IMR-90 (cell line): ENCODE measurements at regions of chr9 and their contacts with region 1.

Region 1: DNA sequence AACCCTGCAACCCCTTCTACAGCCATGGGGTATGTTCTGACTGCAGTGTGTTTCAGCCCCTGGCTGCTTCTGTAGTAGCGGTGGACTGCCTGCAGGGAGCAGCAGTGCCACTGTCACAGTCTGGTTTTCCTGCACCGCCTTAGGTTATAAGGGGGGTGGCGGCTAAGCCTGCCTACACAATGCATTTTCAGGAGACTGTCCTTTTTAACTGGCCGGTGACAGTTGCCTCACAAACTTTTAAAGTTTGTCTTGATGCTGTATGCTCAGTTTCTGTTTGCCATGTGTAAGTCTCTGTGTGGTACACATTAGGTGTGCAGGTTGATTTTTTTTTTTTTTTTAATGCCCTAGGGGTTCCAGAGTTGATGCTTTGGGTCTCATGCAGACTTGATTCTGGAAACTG is 53.0 kb downstream of the NUP214 start:
- DNase-seq: peak; percentile 86
- ATAC-seq: peak; percentile 91
- H3K4me3 ChIP-seq: no peak overlapping the region
- H3K27ac ChIP-seq: no peak overlapping the region; the same call in 1 of the 2 replicates
- H3K4me1 ChIP-seq: peaks cover 18% of the 10 kb centered on the region
- H3K27me3 ChIP-seq: no peaks in the 10 kb centered on the region
- CTCF ChIP-seq: peak; percentile 94
- POLR2A ChIP-seq: no peak
- RAD21 ChIP-seq: peak; percentile 95

Region 2: DNA sequence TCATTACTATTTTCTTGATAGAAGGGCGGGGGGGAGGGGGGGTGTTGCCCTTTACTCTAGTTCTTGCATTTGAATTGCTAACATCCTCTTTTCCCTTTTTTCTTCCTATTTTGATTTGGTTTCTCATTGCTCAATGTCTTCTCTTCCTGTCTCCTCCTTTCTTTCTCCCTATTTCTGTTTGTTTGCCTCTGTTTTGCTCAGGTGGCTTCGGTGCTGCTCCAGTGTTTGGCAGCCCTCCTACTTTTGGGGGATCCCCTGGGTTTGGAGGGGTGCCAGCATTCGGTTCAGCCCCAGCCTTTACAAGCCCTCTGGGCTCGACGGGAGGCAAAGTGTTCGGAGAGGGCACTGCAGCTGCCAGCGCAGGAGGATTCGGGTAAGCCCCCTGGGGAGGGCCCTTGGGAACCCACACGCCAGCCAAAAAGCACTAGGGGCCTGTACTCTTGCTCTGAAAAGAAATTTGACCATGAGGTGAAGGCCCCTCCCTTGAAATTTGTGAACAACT is 49.6 kb after region 1 on chr9:
- CTCF ChIA-PET with region 1: no interaction called
- POLR2A ChIA-PET with region 1: no interaction called
- dilution Hi-C with region 1: no loop called
- in situ Hi-C with region 1: no loop called
- intact Hi-C with region 1: loop called (anchors 2 kb)
- DNase-seq: no peak
- ATAC-seq: no peak
- H3K4me3 ChIP-seq: no peak overlapping the region
- H3K27ac ChIP-seq: no peak overlapping the region
- H3K4me1 ChIP-seq: peaks cover 19% of the 10 kb centered on the region
- H3K27me3 ChIP-seq: no peaks in the 10 kb centered on the region
- CTCF ChIP-seq: no peak
- POLR2A ChIP-seq: no peak
- RAD21 ChIP-seq: no peak

Region 3: DNA sequence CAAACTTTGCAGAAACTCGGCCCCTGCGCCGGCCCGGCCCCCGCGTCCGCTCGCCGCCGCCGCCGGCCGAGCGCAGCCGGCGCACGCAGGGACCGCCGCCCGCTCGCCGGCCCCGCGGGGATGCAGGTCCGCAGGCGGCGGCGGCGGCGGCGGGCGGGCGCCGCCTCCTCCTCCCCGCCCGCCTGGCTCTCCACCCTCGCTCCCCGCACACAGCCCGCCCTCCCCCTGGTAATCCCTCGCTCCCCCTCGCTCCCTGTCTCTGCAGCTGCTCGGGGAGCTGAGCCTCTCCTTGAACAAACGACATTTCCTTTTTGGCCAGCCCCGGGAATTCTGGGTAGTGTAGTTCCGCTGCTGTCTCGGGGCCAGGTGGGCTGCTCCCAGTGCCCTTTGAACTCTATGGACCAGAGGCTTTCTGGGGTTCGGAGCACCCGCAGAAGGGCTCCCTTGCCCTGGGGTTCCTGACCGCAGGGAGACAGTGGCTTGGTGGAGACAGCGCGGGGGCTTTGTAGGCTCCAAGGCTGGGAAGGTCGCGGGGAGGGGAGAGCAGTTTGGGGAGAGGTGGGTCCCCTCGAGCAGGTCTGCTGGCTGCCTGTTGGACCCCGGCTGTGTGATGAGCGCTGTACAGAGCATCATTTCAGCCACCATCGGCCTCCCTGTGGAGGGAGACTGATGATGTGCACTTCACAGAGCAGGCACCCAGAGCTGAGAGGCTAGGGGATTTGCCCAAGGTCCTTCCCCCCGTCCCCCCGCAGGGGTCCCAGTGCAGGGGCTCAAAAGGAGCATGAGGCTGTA is 99.7 kb after region 1 on chr9:
- CTCF ChIA-PET with region 1: no interaction called
- POLR2A ChIA-PET with region 1: no interaction called
- dilution Hi-C with region 1: no loop called
- in situ Hi-C with region 1: no loop called
- intact Hi-C with region 1: loop called (anchors 2 kb)
- DNase-seq: peak; percentile 78
- ATAC-seq: peak; percentile 93
- H3K4me3 ChIP-seq: peak overlapping the region; percentile 66
- H3K27ac ChIP-seq: no peak overlapping the region
- H3K4me1 ChIP-seq: no peaks in the 10 kb centered on the region
- H3K27me3 ChIP-seq: peaks cover 64% of the 10 kb centered on the region
- CTCF ChIP-seq: no peak
- POLR2A ChIP-seq: no peak
- RAD21 ChIP-seq: no peak

Region 4: GRCh38 chr9:131334629-131335367 is 156.4 kb after region 1 on chr9:
- CTCF ChIA-PET with region 1: interaction called, 45 read pairs
- POLR2A ChIA-PET with region 1: no interaction called
- dilution Hi-C with region 1: no loop called
- in situ Hi-C with region 1: loop called (anchors 5 kb)
- intact Hi-C with region 1: loop called (anchors 1 kb)
- DNase-seq: peak; percentile 38
- ATAC-seq: peak; percentile 18
- H3K4me3 ChIP-seq: no peak overlapping the region
- H3K27ac ChIP-seq: no peak overlapping the region
- H3K4me1 ChIP-seq: no peaks in the 10 kb centered on the region
- H3K27me3 ChIP-seq: no peaks in the 10 kb centered on the region
- CTCF ChIP-seq: no peak
- POLR2A ChIP-seq: no peak
- RAD21 ChIP-seq: no peak

Region 5: GRCh38 chr9:131432597-131433306 is 254.4 kb after region 1 on chr9:
- CTCF ChIA-PET with region 1: no interaction called
- POLR2A ChIA-PET with region 1: no interaction called
- dilution Hi-C with region 1: no loop called
- in situ Hi-C with region 1: no loop called
- intact Hi-C with region 1: loop called (anchors 10 kb)
- DNase-seq: peak; percentile 97
- ATAC-seq: peak; percentile 93
- H3K4me3 ChIP-seq: no peak overlapping the region
- H3K27ac ChIP-seq: peak overlapping the region; percentile 75
- H3K4me1 ChIP-seq: peaks cover 27% of the 10 kb centered on the region
- H3K27me3 ChIP-seq: no peaks in the 10 kb centered on the region
- CTCF ChIP-seq: no peak
- POLR2A ChIP-seq: peak; percentile 45; the same call in 1 of the 2 replicates
- RAD21 ChIP-seq: no peak; the same call in 1 of the 2 replicates

Region 6: GRCh38 chr9:131446276-131446675 is 267.9 kb after region 1 on chr9:
- CTCF ChIA-PET with region 1: no interaction called
- POLR2A ChIA-PET with region 1: no interaction called
- dilution Hi-C with region 1: no loop called
- in situ Hi-C with region 1: no loop called
- intact Hi-C with region 1: no loop called
- DNase-seq: no peak
- ATAC-seq: no peak
- H3K4me3 ChIP-seq: no peak overlapping the region
- H3K27ac ChIP-seq: no peak overlapping the region
- H3K4me1 ChIP-seq: no peaks in the 10 kb centered on the region
- H3K27me3 ChIP-seq: no peaks in the 10 kb centered on the region
- CTCF ChIP-seq: no peak
- POLR2A ChIP-seq: no peak
- RAD21 ChIP-seq: no peak